ENCODE measurements at regions of chr6 and their contacts with region 1.

Region 1: GRCh38 chr6:109478841-109479624 is 4.0 kb downstream of the ZBTB24 start:
- DNase-seq: no peak
- H3K4me3 ChIP-seq: no peak overlapping the region
- H3K27me3 ChIP-seq: no peaks in the 10 kb centered on the region
- CTCF ChIP-seq: no peak

Region 2: GRCh38 chr6:109455502-109456282 is 23.3 kb before region 1 on chr6 and contains the start of gene MICAL1:
- CTCF ChIA-PET with region 1: interaction called, 3 read pairs
- POLR2A ChIA-PET with region 1: interaction called, 16 read pairs
- DNase-seq: no peak
- H3K4me3 ChIP-seq: peak within 1 kb of the TSS; percentile 92
- H3K27me3 ChIP-seq: no peaks in the 10 kb centered on the region
- CTCF ChIP-seq: peak; percentile 54
- polyA plus RNA-seq, gene MICAL1: 47.3 and 84.6 TPM in 2 replicates

Measured in BJ (cell line).